ENCODE measurements at regions of chr15 and their contacts with region 1.

Region 1: DNA sequence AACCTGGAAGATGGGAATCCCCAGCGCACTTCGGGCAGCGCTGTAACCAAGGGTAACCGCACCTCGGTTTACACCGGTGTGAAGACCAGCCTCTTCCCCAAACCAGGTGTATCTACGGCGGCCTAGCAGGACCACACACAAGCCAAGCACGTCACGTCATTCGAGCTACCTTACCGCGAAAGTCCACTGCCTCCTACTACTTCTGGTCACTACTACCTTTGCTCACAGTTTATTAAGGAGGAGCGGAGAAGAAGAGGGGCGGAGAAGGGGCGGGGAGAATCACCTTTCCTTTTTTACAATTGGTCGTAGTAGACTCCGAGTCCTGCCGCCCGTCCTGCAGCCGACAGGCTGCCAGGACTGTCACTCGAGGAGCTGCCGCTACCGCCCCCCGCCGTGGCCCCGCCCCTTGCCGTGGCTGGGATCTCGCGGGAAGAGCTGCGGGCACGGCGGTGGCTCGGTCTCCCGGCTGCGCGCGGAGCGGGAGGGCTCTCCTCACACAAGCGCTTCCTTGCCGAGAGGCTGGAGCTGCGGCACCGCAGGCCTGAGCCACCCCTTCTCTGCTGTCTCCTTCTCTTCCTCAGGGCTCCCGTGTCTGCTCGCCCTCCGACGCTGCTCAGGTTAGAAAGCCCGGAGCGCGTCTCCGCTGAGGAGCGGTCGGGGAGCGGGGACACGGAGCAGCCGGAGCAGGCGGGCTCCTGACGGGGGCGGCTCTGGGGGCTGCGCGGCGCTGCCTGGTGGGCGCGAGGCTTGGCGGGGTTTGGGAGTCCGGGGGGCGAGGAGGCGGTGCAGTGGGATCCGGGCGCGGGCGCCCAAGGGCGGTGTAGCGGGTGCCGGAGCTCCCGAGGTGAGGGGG is at the start of gene GLCE:
- DNase-seq: peak; percentile 98
- H3K4me3 ChIP-seq: peak within 1 kb of the TSS; percentile 91 to 99 (median 96)
- H3K27ac ChIP-seq: peak within 1 kb of the TSS; percentile 78
- H3K4me1 ChIP-seq: peaks cover 46% of the 10 kb centered on the region
- H3K27me3 ChIP-seq: no peaks in the 10 kb centered on the region
- CTCF ChIP-seq: no peak
- POLR2A ChIP-seq: peak; percentile 95
- total RNA-seq, gene GLCE: 79.8 and 86.6 TPM in 2 replicates

Region 2: DNA sequence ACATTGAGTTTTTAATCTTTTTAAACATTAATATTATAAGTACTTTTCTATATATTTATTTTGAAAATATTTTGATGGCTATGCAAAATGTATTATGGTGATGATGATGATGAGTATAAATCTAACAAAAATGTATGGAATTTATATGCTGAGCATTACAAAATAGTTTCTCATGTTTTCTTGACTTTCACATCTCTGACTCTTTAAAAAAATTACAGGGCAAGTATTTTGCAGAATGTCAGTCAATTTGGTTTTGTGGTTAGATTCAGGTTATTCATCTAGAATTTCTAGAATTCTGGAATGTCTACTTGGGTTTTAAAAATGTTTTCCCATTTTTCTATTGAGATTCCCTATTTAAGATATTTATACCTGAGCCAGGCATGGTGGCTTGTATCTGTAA is 298.0 kb before region 1 on chr15:
- CTCF ChIA-PET with region 1: no interaction called
- POLR2A ChIA-PET with region 1: no interaction called
- dilution Hi-C with region 1: no loop called
- intact Hi-C with region 1: no loop called
- DNase-seq: no peak
- H3K4me3 ChIP-seq: no peak overlapping the region
- H3K27ac ChIP-seq: no peak overlapping the region
- H3K4me1 ChIP-seq: no peaks in the 10 kb centered on the region
- H3K27me3 ChIP-seq: peaks cover 12 to 13% of the 10 kb centered on the region in 2 experiments
- CTCF ChIP-seq: no peak
- POLR2A ChIP-seq: no peak

Region 3: DNA sequence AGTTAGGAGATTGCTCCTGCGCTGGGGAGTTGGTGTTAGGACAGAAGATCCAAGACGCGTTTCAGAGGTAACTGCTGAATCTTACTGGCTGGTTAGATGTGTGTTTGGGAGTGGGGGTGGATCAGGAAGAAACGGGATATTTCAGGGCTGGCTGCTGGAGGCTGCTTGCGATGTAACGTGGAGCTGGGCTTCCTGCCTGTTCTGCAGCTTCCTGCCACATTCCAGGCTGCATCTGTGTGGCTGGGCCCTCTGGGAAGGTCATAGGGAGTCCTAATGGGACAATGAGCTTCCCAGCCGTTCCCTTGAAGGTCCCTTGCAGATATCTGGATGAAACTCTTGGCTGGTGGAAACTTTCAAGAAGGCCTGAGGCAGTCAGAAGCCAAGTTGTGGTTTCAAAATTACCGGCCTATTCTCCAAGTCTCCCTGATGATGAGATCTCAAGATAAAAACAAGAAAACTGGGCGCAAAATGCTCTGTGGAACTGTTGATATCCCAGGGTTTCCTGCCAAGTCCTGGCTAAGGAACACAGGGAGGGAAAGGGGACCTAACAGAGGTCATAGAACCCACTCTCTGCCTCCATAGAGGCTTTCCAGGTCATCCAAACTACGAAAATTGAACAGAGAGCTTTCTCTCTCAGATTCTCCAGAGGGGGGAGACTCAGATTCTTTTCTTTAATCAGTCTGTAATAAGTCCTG is 78.9 kb before region 1 on chr15:
- CTCF ChIA-PET with region 1: interaction called, 12 read pairs
- POLR2A ChIA-PET with region 1: interaction called, 12 read pairs
- dilution Hi-C with region 1: no loop called
- intact Hi-C with region 1: loop called (anchors 1 kb)
- DNase-seq: peak; percentile 80
- H3K4me3 ChIP-seq: peak overlapping the region in 1 of 3 experiments; percentile 14
- H3K27ac ChIP-seq: peak overlapping the region; percentile 95
- H3K4me1 ChIP-seq: peaks cover 34% of the 10 kb centered on the region
- H3K27me3 ChIP-seq: no peaks in the 10 kb centered on the region
- CTCF ChIP-seq: no peak
- POLR2A ChIP-seq: peak; percentile 37

Region 4: DNA sequence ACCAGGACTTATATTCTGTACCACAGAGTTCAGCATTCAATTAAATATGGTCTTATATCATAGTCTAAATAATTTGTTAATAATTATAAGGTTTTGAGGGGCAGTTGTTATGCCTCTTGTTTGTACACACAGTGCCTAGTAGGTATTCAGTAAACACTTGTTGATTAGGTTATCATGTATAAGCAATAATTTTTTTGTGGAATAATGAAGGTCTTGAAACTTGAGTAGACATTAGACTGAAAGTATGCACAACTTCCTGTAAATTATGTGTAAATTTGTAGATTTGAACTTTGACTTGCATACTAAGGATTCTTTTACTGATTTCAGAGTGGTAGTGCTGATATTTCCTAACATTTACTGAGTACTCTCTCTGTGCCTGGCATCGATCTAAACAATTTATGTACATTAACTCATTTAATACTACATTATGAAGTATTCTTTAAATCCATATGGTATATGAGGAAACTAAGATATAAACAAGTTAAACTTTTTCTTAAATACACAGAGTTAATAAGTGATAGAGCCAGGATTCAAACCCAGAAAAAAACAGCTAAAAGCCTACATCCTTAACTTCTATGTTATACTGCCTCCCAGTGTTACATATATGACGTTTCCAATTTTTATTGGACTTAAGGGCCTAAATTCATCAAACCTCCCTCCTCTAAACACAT is 65.1 kb after region 1 on chr15:
- CTCF ChIA-PET with region 1: interaction called, 29 read pairs
- POLR2A ChIA-PET with region 1: no interaction called
- dilution Hi-C with region 1: no loop called
- intact Hi-C with region 1: loop called (anchors 2 kb)
- DNase-seq: peak; percentile 62
- H3K4me3 ChIP-seq: no peak overlapping the region
- H3K27ac ChIP-seq: no peak overlapping the region
- H3K4me1 ChIP-seq: peaks cover 2% of the 10 kb centered on the region
- H3K27me3 ChIP-seq: no peaks in the 10 kb centered on the region
- CTCF ChIP-seq: peak; percentile 5 to 18
- POLR2A ChIP-seq: no peak

Region 5: GRCh38 chr15:69265347-69265955 is 105.1 kb after region 1 on chr15:
- CTCF ChIA-PET with region 1: interaction called, 20 read pairs
- POLR2A ChIA-PET with region 1: no interaction called
- dilution Hi-C with region 1: no loop called
- intact Hi-C with region 1: no loop called
- DNase-seq: peak; percentile 46
- H3K4me3 ChIP-seq: no peak overlapping the region
- H3K27ac ChIP-seq: no peak overlapping the region
- H3K4me1 ChIP-seq: no peaks in the 10 kb centered on the region
- H3K27me3 ChIP-seq: no peaks in the 10 kb centered on the region
- CTCF ChIP-seq: peak; percentile 22 to 33
- POLR2A ChIP-seq: no peak